ENCODE measurements at regions of chr3 and their contacts with region 1.

Region 1: GRCh38 chr3:158790901-158791589 is 10.8 kb upstream of the MFSD1 start:
- DNase-seq: peak; percentile 48
- H3K4me3 Mint-ChIP-seq: peak overlapping the region; percentile 36
- H3K27ac Mint-ChIP-seq: no peak overlapping the region
- H3K4me1 Mint-ChIP-seq: peaks cover 5% of the 10 kb centered on the region
- H3K27me3 Mint-ChIP-seq: no peaks in the 10 kb centered on the region

Region 2: DNA sequence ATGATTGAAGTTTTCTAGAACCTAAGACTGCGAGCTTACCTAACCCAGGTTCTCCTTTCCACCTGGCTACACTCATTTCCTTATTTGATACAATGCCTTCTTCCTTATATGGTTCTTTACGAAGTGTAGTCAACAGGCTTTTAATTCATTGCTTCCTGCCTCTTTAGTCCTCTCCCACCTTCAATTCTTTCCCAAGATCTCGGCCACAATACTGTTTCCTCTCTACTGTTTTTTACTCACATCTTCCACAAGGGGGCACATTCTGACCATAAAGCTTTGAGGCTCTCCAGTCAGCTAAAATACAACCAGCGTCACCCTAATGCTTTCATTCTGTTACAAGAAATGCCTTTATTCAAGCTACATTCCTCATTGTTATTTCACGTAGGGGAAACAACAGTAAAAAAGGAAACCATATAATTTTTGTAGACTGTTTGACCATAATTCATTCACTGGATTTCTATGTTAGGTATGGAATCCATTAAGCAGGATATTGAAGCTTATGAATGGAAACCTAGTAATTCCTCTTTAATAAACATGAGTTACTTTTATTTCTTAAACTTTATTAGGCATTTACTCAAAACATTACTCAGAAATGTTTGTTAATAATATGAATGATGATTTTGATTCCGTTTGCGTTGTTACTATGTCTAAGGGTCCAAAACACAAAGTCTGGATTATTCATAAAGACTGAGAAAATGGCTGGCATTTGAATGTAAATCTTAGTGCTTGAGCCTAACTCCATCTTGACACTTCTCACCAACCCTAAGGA is 1258.3 kb before region 1 on chr3:
- CTCF ChIA-PET with region 1: no interaction called
- intact Hi-C with region 1: loop called (anchors 1 kb)
- DNase-seq: peak; percentile 31
- H3K4me3 Mint-ChIP-seq: no peak overlapping the region
- H3K27ac Mint-ChIP-seq: no peak overlapping the region
- H3K4me1 Mint-ChIP-seq: no peaks in the 10 kb centered on the region
- H3K27me3 Mint-ChIP-seq: no peaks in the 10 kb centered on the region

Region 3: GRCh38 chr3:157618075-157618760 is 1172.8 kb before region 1 on chr3:
- CTCF ChIA-PET with region 1: interaction called, 4 read pairs
- intact Hi-C with region 1: loop called (anchors 2 kb)
- DNase-seq: peak; percentile 26
- H3K4me3 Mint-ChIP-seq: no peak overlapping the region
- H3K27ac Mint-ChIP-seq: no peak overlapping the region
- H3K4me1 Mint-ChIP-seq: peaks cover 5% of the 10 kb centered on the region
- H3K27me3 Mint-ChIP-seq: peaks cover 13% of the 10 kb centered on the region

Region 4: GRCh38 chr3:158313338-158313927 is 477.6 kb before region 1 on chr3:
- CTCF ChIA-PET with region 1: no interaction called
- intact Hi-C with region 1: no loop called
- DNase-seq: no peak
- H3K4me3 Mint-ChIP-seq: no peak overlapping the region
- H3K27ac Mint-ChIP-seq: no peak overlapping the region
- H3K4me1 Mint-ChIP-seq: peaks cover 1% of the 10 kb centered on the region
- H3K27me3 Mint-ChIP-seq: no peaks in the 10 kb centered on the region

Region 5: DNA sequence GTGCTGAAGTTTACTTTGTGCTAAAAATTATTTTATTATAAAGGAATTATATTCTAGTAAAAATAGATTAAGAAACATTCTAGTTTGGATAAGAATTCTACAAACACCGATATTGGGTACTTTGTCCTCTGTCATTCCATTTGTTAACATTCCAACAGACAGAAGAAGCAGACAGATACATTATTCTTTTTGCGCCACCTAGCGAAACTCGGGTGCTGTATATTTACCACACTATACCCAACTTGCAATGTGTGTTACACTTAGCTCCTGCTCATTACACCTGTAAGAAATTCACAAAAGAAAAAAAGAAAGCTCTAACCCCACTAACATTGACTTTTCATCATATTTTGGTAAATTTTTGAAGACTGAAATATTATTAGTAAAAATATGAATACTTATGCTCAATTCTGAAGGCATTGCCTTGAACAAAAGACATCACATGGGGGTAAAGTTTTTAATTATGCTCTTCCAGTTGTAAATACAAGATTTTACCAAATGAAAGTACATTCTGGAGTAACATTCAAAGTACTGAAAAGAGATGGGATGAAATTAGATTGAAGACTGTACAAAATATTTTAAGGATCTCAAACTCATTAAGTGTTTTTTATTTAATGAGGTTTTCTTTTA is 356.5 kb before region 1 on chr3:
- CTCF ChIA-PET with region 1: no interaction called
- intact Hi-C with region 1: no loop called
- DNase-seq: peak; percentile 63
- H3K4me3 Mint-ChIP-seq: no peak overlapping the region
- H3K27ac Mint-ChIP-seq: no peak overlapping the region
- H3K4me1 Mint-ChIP-seq: no peaks in the 10 kb centered on the region
- H3K27me3 Mint-ChIP-seq: no peaks in the 10 kb centered on the region

Region 6: DNA sequence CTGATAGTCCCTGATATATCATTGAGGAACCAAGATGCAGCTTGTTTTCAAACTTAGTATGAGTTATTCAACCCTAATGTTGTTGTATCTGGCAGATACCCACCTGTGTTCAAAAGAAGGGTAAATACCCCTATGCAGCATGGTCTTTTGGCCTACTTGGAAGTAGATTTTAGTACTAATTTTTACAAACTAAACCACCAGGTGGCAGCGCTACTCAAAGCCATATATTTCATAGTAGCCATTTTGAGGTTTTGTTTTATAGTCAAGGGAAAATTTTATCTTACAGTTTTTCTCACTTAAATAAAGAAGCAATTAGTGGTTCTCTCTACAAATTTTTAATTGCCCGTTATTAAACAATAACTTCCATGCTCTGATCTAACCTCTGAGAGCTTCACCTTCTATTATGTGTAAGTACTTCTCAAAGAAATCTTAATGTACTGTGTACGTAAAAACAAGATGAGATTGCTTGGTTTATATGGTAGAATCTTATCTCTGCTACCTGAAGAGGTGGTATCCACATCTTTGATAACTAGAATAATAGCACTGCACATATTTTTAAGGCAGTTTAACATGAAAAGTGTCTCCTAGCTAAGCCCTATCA is 251.5 kb before region 1 on chr3:
- CTCF ChIA-PET with region 1: interaction called, 3 read pairs
- intact Hi-C with region 1: loop called (anchors 1 kb)
- DNase-seq: peak; percentile 63
- H3K4me3 Mint-ChIP-seq: no peak overlapping the region
- H3K27ac Mint-ChIP-seq: no peak overlapping the region
- H3K4me1 Mint-ChIP-seq: no peaks in the 10 kb centered on the region
- H3K27me3 Mint-ChIP-seq: no peaks in the 10 kb centered on the region

Region 7: GRCh38 chr3:158672293-158673176 is 118.5 kb before region 1 on chr3 and contains the start of gene LXN:
- CTCF ChIA-PET with region 1: interaction called, 3 read pairs
- intact Hi-C with region 1: loop called (anchors 1 kb)
- DNase-seq: peak; percentile 90
- H3K4me3 Mint-ChIP-seq: peak within 1 kb of the TSS; percentile 90
- H3K27ac Mint-ChIP-seq: peak within 1 kb of the TSS; percentile 88
- H3K4me1 Mint-ChIP-seq: peaks cover 17% of the 10 kb centered on the region
- H3K27me3 Mint-ChIP-seq: no peaks in the 10 kb centered on the region
- total RNA-seq, gene LXN: 3.7 to 4.0 TPM

Region 8: DNA sequence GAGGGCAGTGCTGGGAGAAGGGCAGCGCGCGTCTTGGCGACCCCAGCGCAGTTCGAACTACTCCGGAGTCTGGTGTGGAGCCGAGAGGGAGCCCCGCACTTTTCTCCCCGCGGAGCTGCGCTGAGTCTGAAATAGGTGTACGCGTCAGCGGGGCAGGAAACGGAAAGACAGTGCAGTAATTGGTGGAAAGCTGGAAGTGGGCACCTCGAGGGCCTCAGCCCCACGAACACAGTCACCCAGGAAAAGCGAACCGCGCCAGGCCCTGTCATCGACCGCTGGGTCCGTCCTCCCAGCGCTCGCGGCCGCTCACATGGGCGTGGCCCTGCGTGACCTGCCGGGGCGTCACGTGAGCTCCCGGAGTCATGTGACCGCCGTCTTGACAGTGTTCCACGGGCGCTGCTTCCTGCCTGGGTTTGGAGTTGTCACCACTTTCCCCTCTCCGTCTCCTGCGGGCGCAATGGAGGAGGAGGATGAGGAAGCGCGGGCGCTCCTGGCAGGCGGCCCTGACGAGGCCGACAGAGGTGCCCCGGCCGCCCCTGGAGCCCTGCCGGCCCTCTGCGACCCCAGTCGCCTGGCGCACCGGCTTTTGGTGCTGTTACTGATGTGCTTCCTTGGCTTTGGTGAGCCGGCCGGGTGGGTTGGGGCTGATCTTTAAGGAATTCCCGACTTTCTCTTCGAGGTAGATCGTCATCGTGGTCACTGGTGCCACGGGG is 10.8 kb after region 1 on chr3 and contains the start of gene MFSD1:
- CTCF ChIA-PET with region 1: interaction called, 13 read pairs
- intact Hi-C with region 1: loop called (anchors 1 kb)
- DNase-seq: peak; percentile 92
- H3K4me3 Mint-ChIP-seq: peak within 1 kb of the TSS; percentile 84
- H3K27ac Mint-ChIP-seq: peak within 1 kb of the TSS; percentile 44
- H3K4me1 Mint-ChIP-seq: peaks cover 21% of the 10 kb centered on the region
- H3K27me3 Mint-ChIP-seq: no peaks in the 10 kb centered on the region
- total RNA-seq, gene MFSD1: 4.8 to 5.7 TPM

Region 9: GRCh38 chr3:158839966-158840365 is 48.9 kb after region 1 on chr3:
- CTCF ChIA-PET with region 1: no interaction called
- intact Hi-C with region 1: no loop called
- DNase-seq: no peak
- H3K4me3 Mint-ChIP-seq: no peak overlapping the region
- H3K27ac Mint-ChIP-seq: no peak overlapping the region
- H3K4me1 Mint-ChIP-seq: no peaks in the 10 kb centered on the region
- H3K27me3 Mint-ChIP-seq: no peaks in the 10 kb centered on the region

Measured in activated naive CD4-positive, alpha-beta T cell treated with anti-CD3 and anti-CD28 coated beads for 36 hours (primary cell).